Activated T-helper 1 cell treated with anti-CD3 and anti-CD28 coated beads, Interleukin-12 subunit alpha, Interleukin-12 subunit beta, Interleukin-2, Interleukin-4 antibody, amounts not matched to agents 30 ng/mL and 10 ng/mL and 1 ng/mL, durations not matched to agents 14 hours and 24 hours and 36 hours (primary cell): ENCODE measurements at regions of chr22 and their contacts with region 1.

Region 1: DNA sequence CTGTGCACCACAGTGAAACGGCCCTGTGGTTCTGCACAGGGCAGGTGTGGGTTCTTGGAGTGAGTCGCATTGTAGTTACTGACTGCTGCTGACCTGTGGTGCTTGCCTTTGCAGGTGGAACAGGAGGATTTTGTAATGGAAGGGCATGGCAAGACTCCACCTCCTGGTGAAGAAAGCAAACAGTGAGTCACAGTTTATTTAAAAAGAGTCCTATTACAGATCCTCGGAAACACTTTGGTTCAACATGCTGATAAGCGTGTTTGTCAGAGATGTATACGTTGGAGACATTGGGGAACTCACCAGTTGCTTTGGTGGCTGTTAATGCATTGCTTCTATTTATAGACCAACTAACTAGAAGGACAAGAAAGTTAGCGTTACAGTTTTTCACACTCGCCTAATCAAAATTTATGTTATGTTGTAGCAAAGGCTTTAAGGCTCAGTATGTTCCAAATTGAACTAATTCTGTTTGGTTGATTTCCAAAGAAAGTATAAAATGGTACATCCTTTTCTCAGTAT is 21.7 kb upstream of the TNRC6B start:
- DNase-seq: no peak
- H3K4me3 Mint-ChIP-seq: no peak overlapping the region
- H3K27ac Mint-ChIP-seq: no peak overlapping the region
- H3K4me1 Mint-ChIP-seq: peaks cover 10% of the 10 kb centered on the region
- H3K27me3 Mint-ChIP-seq: no peaks in the 10 kb centered on the region

Region 2: GRCh38 chr22:40036591-40037225 is 119.4 kb before region 1 on chr22:
- intact Hi-C with region 1: no loop called
- DNase-seq: peak; percentile 23
- H3K4me3 Mint-ChIP-seq: no peak overlapping the region
- H3K27ac Mint-ChIP-seq: no peak overlapping the region
- H3K4me1 Mint-ChIP-seq: no peaks in the 10 kb centered on the region
- H3K27me3 Mint-ChIP-seq: peaks cover 10% of the 10 kb centered on the region

Region 3: GRCh38 chr22:40118979-40119378 is 37.1 kb before region 1 on chr22:
- intact Hi-C with region 1: loop called (anchors 2 kb)
- DNase-seq: no peak
- H3K4me3 Mint-ChIP-seq: no peak overlapping the region
- H3K27ac Mint-ChIP-seq: no peak overlapping the region
- H3K4me1 Mint-ChIP-seq: peaks cover 31% of the 10 kb centered on the region
- H3K27me3 Mint-ChIP-seq: no peaks in the 10 kb centered on the region